K562 (cell line): ENCODE measurements at regions of chr16 and their contacts with region 1.

Region 1: DNA sequence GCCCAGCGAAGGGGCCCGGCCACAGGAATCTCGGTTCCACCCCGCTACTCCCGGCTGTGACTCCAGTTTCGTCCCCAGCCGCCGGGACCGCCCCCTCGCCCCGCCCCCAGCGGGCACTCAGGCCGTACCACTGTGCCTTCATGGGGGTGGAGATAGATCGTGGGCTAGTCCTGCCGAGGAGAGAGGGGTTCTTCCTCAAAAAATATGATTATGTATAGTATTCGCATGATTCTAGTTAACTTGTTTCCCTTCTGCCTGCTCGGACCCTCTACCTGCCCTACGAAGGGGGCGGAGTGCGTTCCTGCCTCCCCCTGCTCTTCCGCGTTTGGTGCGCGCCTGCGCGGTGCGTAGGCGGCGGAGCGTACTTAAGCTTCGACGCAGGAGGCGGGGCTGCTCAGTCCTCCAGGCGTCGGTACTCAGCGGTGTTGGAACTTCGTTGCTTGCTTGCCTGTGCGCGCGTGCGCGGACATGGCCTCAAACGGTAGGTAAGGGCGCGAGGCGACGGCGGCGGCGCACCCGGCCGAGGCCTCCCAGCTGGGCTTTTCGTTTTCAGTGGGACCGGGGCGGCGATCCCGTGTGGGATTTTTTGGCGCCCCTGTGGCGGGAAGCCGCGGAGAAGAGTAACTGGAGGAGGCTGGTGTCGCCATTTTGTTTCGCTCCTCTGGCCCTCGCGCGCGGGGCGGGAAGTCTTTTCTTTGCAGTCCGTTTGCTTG is at the start of gene FUS:
- DNase-seq: peak; percentile 94 to 97 (median 94)
- ATAC-seq: peak; percentile 75
- H3K4me3 ChIP-seq: peak within 1 kb of the TSS; percentile 81
- H3K27ac ChIP-seq: peak within 1 kb of the TSS; percentile 100
- H3K4me1 ChIP-seq: peaks cover 18 to 21% of the 10 kb centered on the region in 2 experiments
- H3K27me3 ChIP-seq: no peaks in the 10 kb centered on the region; a peak in 1 of 5 replicates
- CTCF ChIP-seq: peak in 2 of 3 experiments; percentile 4 to 5; a peak in 1 of 6 replicates
- EP300 ChIP-seq: no peak
- POLR2A ChIP-seq: peak; percentile 100
- RAD21 ChIP-seq: peak; percentile 2 to 25; a peak in 1 of 4 replicates
- polyA plus RNA-seq, gene FUS: 43.9 to 59.5 TPM

Region 2: GRCh38 chr16:31002250-31002700 is 177.6 kb before region 1 on chr16:
- CTCF ChIA-PET with region 1: no interaction called
- POLR2A ChIA-PET with region 1: interaction called, 13 read pairs
- in situ Hi-C with region 1: no loop called
- intact Hi-C with region 1: no loop called
- DNase-seq: no peak
- ATAC-seq: no peak
- H3K4me3 ChIP-seq: no peak overlapping the region
- H3K27ac ChIP-seq: no peak overlapping the region
- H3K4me1 ChIP-seq: peaks cover 37 to 40% of the 10 kb centered on the region in 2 experiments
- H3K27me3 ChIP-seq: no peaks in the 10 kb centered on the region
- CTCF ChIP-seq: no peak
- EP300 ChIP-seq: no peak
- POLR2A ChIP-seq: no peak
- RAD21 ChIP-seq: no peak

Region 3: GRCh38 chr16:31099860-31100638 is 79.9 kb before region 1 on chr16:
- CTCF ChIA-PET with region 1: no interaction called
- POLR2A ChIA-PET with region 1: interaction called, 19 read pairs
- in situ Hi-C with region 1: no loop called
- intact Hi-C with region 1: no loop called
- DNase-seq: peak in 1 of 4 experiments; percentile 62
- ATAC-seq: peak; percentile 13; the same call in 1 of the 3 replicates
- H3K4me3 ChIP-seq: no peak overlapping the region
- H3K27ac ChIP-seq: no peak overlapping the region
- H3K4me1 ChIP-seq: peaks cover 5 to 14% of the 10 kb centered on the region in 2 experiments; a peak in 4 of 5 replicates
- H3K27me3 ChIP-seq: no peaks in the 10 kb centered on the region
- CTCF ChIP-seq: no peak
- EP300 ChIP-seq: no peak
- POLR2A ChIP-seq: no peak
- RAD21 ChIP-seq: no peak

Region 4: GRCh38 chr16:31142109-31143010 is 37.5 kb before region 1 on chr16:
- CTCF ChIA-PET with region 1: no interaction called
- POLR2A ChIA-PET with region 1: interaction called, 39 read pairs
- in situ Hi-C with region 1: no loop called
- intact Hi-C with region 1: no loop called
- DNase-seq: peak; percentile 99 to 100 (median 100)
- ATAC-seq: peak; percentile 97
- H3K4me3 ChIP-seq: peak overlapping the region; percentile 28
- H3K27ac ChIP-seq: peak overlapping the region; percentile 67
- H3K4me1 ChIP-seq: peaks cover 14 to 43% of the 10 kb centered on the region in 2 experiments
- H3K27me3 ChIP-seq: peaks cover 13 to 19% of the 10 kb centered on the region in 2 experiments; a peak in 4 of 5 replicates
- CTCF ChIP-seq: peak; percentile 89 to 95 (median 93)
- EP300 ChIP-seq: no peak
- POLR2A ChIP-seq: peak; percentile 65
- RAD21 ChIP-seq: peak; percentile 91 to 94

Region 5: DNA sequence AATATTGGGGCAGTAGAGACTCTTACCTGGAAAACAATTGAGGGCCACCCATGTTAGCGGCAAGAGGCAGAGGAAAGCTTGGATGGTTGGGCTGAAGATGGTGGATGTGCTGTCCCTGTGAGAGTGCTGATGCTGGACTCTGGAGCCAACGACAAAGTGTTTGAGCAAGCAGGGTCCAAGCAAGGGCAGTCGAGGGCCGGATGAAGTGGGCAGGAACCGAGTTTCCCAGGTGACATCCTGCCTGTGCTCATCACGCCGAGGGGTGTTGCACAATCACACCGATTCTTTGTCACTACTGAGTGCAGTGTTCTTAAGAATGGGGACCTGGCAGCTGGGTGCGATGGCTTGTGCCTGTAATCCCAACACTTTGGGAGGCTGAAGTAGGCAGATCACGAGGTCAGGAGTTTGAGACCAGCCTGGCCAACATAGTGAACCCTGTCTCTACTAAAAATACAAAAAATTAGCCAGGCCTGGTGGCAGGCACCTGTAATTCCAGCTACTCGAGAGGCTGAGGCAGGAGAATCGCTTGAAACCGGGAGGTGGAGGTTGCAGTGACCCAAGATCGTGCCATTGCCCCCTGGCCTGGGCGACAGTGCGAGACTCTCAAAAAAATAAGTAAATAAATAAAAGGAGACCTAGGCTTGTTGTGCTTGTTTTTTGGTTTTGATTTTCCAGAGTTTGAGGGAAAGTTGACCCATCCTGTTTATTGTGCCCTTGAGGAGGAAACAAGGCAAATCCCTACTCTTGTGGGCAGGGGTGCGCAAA is 16.6 kb after region 1 on chr16:
- CTCF ChIA-PET with region 1: no interaction called
- POLR2A ChIA-PET with region 1: interaction called, 63 read pairs
- in situ Hi-C with region 1: no loop called
- intact Hi-C with region 1: loop called (anchors 1 kb)
- DNase-seq: no peak
- ATAC-seq: peak; percentile 7
- H3K4me3 ChIP-seq: no peak overlapping the region
- H3K27ac ChIP-seq: peak overlapping the region; percentile 10; the same call in 1 of the 3 replicates
- H3K4me1 ChIP-seq: peaks cover 10 to 18% of the 10 kb centered on the region in 2 experiments; a peak in 4 of 5 replicates
- H3K27me3 ChIP-seq: no peaks in the 10 kb centered on the region
- CTCF ChIP-seq: no peak
- EP300 ChIP-seq: no peak
- POLR2A ChIP-seq: peak; percentile 70
- RAD21 ChIP-seq: no peak

Region 6: DNA sequence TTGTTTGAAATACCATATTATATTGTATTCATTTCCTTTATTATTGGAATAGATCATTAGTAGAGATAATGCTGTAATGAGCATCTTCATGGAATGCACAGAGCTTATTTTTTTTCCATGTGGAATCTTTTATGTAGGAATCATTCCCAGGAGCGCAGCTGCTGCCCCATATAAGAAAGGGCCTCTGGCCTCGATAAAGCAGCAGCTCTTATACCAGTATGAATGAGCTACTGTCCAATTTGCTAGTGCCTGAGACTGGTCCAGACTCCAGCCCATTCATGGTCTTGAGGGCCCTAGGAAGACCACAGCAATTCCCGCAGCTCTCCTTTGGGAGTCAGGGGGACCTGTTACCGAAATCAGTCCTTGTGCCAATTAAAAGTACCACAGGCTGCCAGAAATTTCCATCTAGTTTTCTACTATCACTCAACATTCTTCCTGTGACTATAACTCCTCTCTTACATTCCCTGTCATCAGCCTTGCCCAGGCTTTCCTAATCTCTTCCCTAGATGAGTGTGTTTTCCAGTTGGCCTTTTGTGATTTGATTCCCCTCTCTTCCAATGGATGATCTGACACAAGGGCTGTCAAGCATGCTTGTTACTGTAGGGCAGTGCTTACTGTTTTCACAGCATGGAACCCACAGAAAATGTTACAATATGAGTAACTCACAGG is 260.7 kb after region 1 on chr16:
- CTCF ChIA-PET with region 1: interaction called, 3 read pairs
- POLR2A ChIA-PET with region 1: interaction called, 4 read pairs
- in situ Hi-C with region 1: no loop called
- intact Hi-C with region 1: loop called (anchors 10 kb)
- DNase-seq: no peak
- ATAC-seq: no peak
- H3K4me3 ChIP-seq: no peak overlapping the region
- H3K27ac ChIP-seq: no peak overlapping the region
- H3K4me1 ChIP-seq: peaks cover 3 to 25% of the 10 kb centered on the region in 2 experiments; a peak in 2 of 5 replicates
- H3K27me3 ChIP-seq: no peaks in the 10 kb centered on the region; a peak in 1 of 5 replicates
- CTCF ChIP-seq: no peak
- EP300 ChIP-seq: no peak
- POLR2A ChIP-seq: no peak
- RAD21 ChIP-seq: no peak

Region 7: GRCh38 chr16:31636433-31636832 is 456.5 kb after region 1 on chr16:
- CTCF ChIA-PET with region 1: no interaction called
- POLR2A ChIA-PET with region 1: no interaction called
- in situ Hi-C with region 1: no loop called
- intact Hi-C with region 1: no loop called
- DNase-seq: no peak
- ATAC-seq: no peak
- H3K4me3 ChIP-seq: no peak overlapping the region
- H3K27ac ChIP-seq: no peak overlapping the region
- H3K4me1 ChIP-seq: no peaks in the 10 kb centered on the region
- H3K27me3 ChIP-seq: peaks cover 0 to 11% of the 10 kb centered on the region in 2 experiments; a peak in 2 of 5 replicates
- CTCF ChIP-seq: no peak
- EP300 ChIP-seq: no peak
- POLR2A ChIP-seq: no peak
- RAD21 ChIP-seq: no peak